PC-3 (cell line): ENCODE measurements at regions of chr20 and their contacts with region 1.

Region 1: GRCh38 chr20:53899351-53900167 is 170.8 kb downstream of the BCAS1 start:
- DNase-seq: peak; percentile 100
- ATAC-seq: peak; percentile 88
- H3K4me3 ChIP-seq: no peak overlapping the region
- H3K27ac ChIP-seq: peak overlapping the region; percentile 79
- H3K4me1 ChIP-seq: peaks cover 41% of the 10 kb centered on the region
- H3K27me3 ChIP-seq: no peaks in the 10 kb centered on the region
- CTCF ChIP-seq: no peak

Region 2: DNA sequence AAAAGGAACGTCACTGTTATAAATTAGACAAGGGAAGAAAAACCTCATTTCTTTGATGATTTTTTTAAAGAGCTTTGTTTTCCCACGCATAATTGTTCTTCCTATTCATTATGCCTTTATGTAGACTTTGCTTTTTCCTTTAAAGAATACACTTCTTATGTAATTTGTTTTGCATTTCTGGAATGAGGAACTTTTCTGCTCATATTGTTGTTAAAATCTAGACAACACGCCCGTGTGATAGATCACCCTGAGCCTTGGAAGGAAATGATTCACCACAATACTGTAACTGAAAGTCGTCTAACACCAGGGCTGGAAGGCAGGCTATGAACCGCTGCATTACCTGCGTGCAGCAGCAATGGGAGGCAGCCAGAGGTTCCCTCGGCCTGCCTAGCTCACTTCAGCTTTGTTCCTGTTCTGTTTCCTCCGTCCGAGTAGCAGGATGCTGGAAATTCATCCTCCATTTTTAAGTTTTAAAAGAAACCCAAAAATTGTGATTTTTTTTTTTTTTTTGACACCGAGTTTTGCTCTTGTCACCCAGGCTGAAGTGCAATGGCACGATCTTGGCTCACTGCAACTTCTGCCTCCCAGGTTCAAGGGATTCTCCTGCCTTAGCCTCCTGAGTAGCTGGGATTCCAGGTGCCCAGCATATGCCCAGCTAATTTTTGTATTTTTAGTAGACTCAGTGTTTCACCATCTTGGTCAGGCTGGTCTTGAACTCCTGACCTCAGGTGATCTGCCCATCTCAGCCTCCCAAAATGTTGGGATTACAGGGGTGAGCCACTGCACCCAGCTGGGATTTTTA is 256.3 kb before region 1 on chr20:
- CTCF ChIA-PET with region 1: no interaction called
- POLR2A ChIA-PET with region 1: interaction called, 12 read pairs
- intact Hi-C with region 1: no loop called
- DNase-seq: peak; percentile 94
- ATAC-seq: peak; percentile 92
- H3K4me3 ChIP-seq: peak overlapping the region; percentile 51
- H3K27ac ChIP-seq: peak overlapping the region; percentile 80
- H3K4me1 ChIP-seq: peaks cover 32% of the 10 kb centered on the region
- H3K27me3 ChIP-seq: no peaks in the 10 kb centered on the region
- CTCF ChIP-seq: no peak

Region 3: GRCh38 chr20:53884859-53885541 is 14.6 kb before region 1 on chr20:
- CTCF ChIA-PET with region 1: interaction called, 5 read pairs
- POLR2A ChIA-PET with region 1: interaction called, 32 read pairs
- intact Hi-C with region 1: loop called (anchors 2 kb)
- DNase-seq: peak; percentile 92
- ATAC-seq: peak; percentile 68
- H3K4me3 ChIP-seq: no peak overlapping the region
- H3K27ac ChIP-seq: peak overlapping the region; percentile 73
- H3K4me1 ChIP-seq: peaks cover 42% of the 10 kb centered on the region
- H3K27me3 ChIP-seq: no peaks in the 10 kb centered on the region
- CTCF ChIP-seq: 0 out of 2 replicates have a peak, but pooled peaks have one; percentile 20

Region 4: DNA sequence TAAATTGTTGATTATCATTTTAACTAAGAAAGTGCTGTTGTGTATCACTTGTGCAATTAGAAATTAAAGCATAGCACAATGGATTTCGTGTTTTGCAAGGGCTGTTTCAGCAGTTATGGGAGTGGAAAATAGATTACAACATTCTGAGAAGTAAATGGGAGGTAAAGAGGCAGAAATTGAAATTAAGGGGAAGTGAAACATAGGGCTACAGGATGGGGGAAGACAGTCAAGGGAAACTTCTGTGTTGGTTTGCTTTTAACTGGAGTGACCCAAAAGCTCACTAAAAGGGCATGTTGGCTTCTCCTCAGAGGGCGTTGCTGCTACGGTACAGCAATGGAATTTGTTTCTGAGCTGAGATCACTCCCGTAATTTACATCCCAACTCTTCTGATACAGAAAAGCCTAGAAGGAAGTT is 23.3 kb after region 1 on chr20:
- CTCF ChIA-PET with region 1: no interaction called
- POLR2A ChIA-PET with region 1: no interaction called
- intact Hi-C with region 1: no loop called
- DNase-seq: no peak
- ATAC-seq: no peak
- H3K4me3 ChIP-seq: no peak overlapping the region
- H3K27ac ChIP-seq: no peak overlapping the region
- H3K4me1 ChIP-seq: peaks cover 31% of the 10 kb centered on the region
- H3K27me3 ChIP-seq: no peaks in the 10 kb centered on the region
- CTCF ChIP-seq: no peak